WTC11 (cell line): ENCODE measurements at regions of chr3 and their contacts with region 1.

Region 1: GRCh38 chr3:129052675-129053074 is 7.9 kb upstream of the GP9 start:
- DNase-seq: no peak
- ATAC-seq: no peak
- H3K4me3 Mint-ChIP-seq: no peak overlapping the region
- H3K27ac Mint-ChIP-seq: no peak overlapping the region
- H3K4me1 Mint-ChIP-seq: 0 out of 2 replicates have a peak, but pooled peaks cover 3% of the 10 kb centered on the region
- H3K27me3 Mint-ChIP-seq: peaks cover 13% of the 10 kb centered on the region
- CTCF ChIP-seq: no peak

Region 2: GRCh38 chr3:128835096-128835495 is 217.6 kb before region 1 on chr3:
- CTCF ChIA-PET with region 1: no interaction called
- POLR2A ChIA-PET with region 1: no interaction called
- DNase-seq: no peak
- ATAC-seq: no peak
- H3K4me3 Mint-ChIP-seq: no peak overlapping the region
- H3K27ac Mint-ChIP-seq: no peak overlapping the region
- H3K4me1 Mint-ChIP-seq: no peaks in the 10 kb centered on the region
- H3K27me3 Mint-ChIP-seq: peaks cover 4% of the 10 kb centered on the region
- CTCF ChIP-seq: no peak

Region 3: DNA sequence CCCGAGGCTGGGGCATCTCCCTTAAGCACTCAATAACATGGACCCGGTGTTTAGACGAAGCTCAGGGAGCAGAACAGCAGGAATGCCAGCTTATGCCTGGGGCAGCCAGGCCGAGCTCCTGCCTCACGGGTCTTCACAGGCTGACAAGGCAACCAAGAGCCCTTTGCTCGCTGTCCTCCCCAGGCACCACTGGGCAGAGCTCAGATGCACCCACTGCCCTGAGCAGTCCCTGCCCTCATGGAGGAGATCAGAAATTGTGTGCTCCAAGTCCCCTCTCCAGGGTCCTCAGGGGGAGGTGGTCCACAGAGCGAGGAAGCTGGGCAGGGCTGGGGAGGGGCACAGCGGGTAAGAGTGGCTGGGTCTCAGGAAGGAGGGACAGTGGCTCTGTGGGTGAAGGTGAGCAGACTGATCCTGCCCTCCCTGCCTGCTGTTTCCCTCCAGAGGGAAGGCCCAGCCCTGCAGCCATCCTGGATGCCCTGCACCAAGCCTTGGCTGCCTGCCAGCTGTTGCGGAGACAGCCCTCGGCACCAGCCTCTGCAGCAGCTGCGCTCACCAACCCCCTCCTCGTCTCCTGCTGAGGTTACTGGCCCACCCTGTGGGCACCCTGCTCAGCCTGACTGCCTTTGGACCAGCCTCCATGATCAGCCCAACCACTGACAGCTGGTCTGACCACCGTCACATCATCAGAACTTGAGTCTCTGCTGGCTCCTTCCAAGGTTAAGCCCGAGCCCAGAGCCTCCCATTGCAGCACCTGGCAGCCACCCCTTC is 13.2 kb before region 1 on chr3:
- CTCF ChIA-PET with region 1: interaction called, 16 read pairs
- POLR2A ChIA-PET with region 1: no interaction called
- DNase-seq: no peak
- ATAC-seq: no peak; the same call in 1 of the 2 replicates
- H3K4me3 Mint-ChIP-seq: no peak overlapping the region
- H3K27ac Mint-ChIP-seq: no peak overlapping the region
- H3K4me1 Mint-ChIP-seq: peaks cover 20% of the 10 kb centered on the region
- H3K27me3 Mint-ChIP-seq: peaks cover 20% of the 10 kb centered on the region
- CTCF ChIP-seq: no peak

Region 4: DNA sequence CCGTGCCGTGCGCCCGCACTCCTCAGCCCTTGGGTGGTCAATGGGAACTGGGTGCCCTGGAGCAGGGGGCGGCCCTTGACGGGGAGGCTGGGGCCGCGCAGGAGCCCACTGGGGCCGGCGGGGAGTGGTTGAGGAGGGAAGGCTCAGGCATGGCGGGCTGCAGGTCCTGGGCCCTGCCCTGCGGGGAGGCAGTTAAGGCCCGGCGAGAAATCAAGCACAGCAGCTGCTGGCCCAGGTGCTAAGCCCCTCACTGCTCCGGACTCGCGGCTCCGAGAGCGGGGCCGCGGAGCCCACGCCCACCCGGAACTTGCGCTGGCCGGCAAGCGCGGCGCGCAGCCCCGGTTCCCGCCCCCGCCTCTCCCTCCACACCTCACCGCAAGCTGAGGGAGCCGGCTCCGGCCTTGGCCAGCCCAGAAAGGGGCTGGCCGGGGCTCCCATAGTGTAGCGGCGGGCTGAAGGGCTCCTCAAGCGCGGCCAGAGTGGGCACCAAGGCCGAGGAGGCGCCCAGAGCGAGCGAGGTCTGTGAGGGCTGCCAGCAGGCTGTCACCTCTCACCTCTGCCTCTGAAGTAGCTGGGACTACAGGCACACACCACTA is 15.7 kb after region 1 on chr3:
- CTCF ChIA-PET with region 1: interaction called, 23 read pairs
- POLR2A ChIA-PET with region 1: no interaction called
- DNase-seq: no peak
- ATAC-seq: no peak
- H3K4me3 Mint-ChIP-seq: no peak overlapping the region
- H3K27ac Mint-ChIP-seq: no peak overlapping the region
- H3K4me1 Mint-ChIP-seq: no peaks in the 10 kb centered on the region
- H3K27me3 Mint-ChIP-seq: peaks cover 4% of the 10 kb centered on the region; the same call in 1 of the 2 replicates
- CTCF ChIP-seq: no peak

Region 5: DNA sequence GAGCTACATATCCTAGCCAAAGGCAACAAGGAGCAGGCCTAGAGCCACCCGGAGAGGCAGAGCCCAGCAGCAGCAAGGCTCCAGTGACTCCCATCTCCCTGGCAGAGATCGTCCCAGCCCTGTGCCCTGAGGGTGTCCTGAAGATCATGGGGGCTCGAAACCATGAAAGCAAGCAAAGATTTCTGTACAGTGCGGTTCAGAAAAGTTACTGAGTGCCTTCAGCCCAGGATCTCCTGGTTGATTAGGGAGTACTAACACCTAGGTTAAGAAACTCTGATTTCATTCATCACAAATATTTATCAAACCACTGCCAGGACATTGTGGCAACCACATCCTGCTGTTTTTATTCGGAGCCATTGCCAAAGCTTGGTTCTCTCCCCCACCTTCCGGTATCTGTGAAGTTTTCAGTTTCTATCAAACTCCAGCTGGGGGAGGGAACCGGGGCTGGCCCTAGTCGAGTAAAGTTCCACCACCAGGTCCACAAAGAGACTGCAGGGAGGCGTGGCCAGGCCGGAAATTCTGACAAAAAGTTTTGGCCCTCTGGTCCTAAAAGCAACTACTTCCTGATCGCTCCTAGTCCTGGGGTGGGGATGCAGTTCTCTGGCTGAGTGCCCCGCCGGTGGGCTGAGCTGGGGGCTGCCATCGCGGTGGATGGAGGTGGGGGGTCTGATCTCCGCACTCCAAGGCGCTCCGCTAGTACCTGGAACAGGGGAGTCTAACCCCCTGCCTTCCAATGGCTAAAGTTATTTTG is 67.8 kb after region 1 on chr3:
- CTCF ChIA-PET with region 1: interaction called, 26 read pairs
- POLR2A ChIA-PET with region 1: interaction called, 3 read pairs
- DNase-seq: peak; percentile 85
- ATAC-seq: peak; percentile 3
- H3K4me3 Mint-ChIP-seq: peak overlapping the region; percentile 83
- H3K27ac Mint-ChIP-seq: peak overlapping the region; percentile 99
- H3K4me1 Mint-ChIP-seq: peaks cover 56% of the 10 kb centered on the region
- H3K27me3 Mint-ChIP-seq: peaks cover 4% of the 10 kb centered on the region; the same call in 1 of the 2 replicates
- CTCF ChIP-seq: no peak

Region 6: GRCh38 chr3:129238945-129239706 is 186.5 kb after region 1 on chr3:
- CTCF ChIA-PET with region 1: no interaction called
- POLR2A ChIA-PET with region 1: no interaction called
- DNase-seq: no peak
- ATAC-seq: peak; percentile 25; the same call in 1 of the 2 replicates
- H3K4me3 Mint-ChIP-seq: no peak overlapping the region
- H3K27ac Mint-ChIP-seq: no peak overlapping the region
- H3K4me1 Mint-ChIP-seq: peaks cover 6% of the 10 kb centered on the region
- H3K27me3 Mint-ChIP-seq: no peaks in the 10 kb centered on the region
- CTCF ChIP-seq: no peak